Caco-2 (cell line): ENCODE measurements at regions of chr2 and their contacts with region 1.

Region 1: DNA sequence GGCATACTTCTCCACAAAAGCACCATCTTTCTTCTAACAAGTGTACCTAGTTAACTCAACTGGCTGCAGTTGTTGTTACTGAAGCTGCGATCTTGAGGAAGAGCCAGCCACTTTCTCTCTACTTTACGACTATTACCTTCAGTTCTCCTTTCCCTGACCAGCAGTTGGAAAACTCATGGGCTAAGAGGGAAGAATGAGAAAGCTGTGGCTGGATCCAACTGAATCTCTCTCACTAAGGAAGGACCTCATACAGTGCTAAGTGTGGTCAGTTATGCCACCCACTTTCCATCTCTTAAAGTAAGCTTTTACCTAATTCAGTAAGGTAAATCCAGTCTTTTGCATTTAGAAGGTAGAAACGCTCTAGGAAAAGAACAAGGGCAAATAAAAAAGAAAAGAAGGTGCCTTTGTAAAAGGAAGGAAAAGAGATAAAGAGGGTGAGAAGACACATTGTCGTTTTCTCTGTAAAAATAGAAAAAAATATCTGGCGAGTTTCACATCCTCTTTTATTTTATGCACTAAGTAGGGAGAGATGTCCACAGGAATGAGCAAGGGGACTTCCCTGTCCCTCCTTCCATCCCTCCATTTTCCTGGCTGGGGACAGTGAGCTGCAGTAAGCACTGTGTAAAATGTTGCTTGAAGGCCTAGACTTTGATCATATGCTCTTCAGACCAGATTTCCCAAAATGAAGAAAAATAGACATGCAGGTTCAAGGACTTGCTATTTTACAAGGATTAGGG is 73.4 kb downstream of the PLEKHM3 start:
- DNase-seq: no peak
- H3K4me3 ChIP-seq: no peak overlapping the region
- H3K4me3 Mint-ChIP-seq: no peak overlapping the region
- H3K27ac Mint-ChIP-seq: peak overlapping the region; percentile 68
- H3K4me1 ChIP-seq: peaks cover 65% of the 10 kb centered on the region
- H3K4me1 Mint-ChIP-seq: peaks cover 43% of the 10 kb centered on the region
- H3K27me3 ChIP-seq: no peaks in the 10 kb centered on the region
- H3K27me3 Mint-ChIP-seq: no peaks in the 10 kb centered on the region
- CTCF ChIP-seq: no peak

Region 2: GRCh38 chr2:207734264-207734635 is 217.7 kb before region 1 on chr2:
- CTCF ChIA-PET with region 1: no interaction called
- POLR2A ChIA-PET with region 1: no interaction called
- intact Hi-C with region 1: no loop called
- DNase-seq: peak in 1 of 2 experiments; percentile 55
- H3K4me3 ChIP-seq: no peak overlapping the region
- H3K4me3 Mint-ChIP-seq: peak overlapping the region; percentile 52
- H3K27ac Mint-ChIP-seq: no peak overlapping the region
- H3K4me1 ChIP-seq: peaks cover 20% of the 10 kb centered on the region
- H3K4me1 Mint-ChIP-seq: peaks cover 19% of the 10 kb centered on the region
- H3K27me3 ChIP-seq: no peaks in the 10 kb centered on the region
- H3K27me3 Mint-ChIP-seq: no peaks in the 10 kb centered on the region
- CTCF ChIP-seq: peak in 1 of 2 experiments; percentile 67

Region 3: DNA sequence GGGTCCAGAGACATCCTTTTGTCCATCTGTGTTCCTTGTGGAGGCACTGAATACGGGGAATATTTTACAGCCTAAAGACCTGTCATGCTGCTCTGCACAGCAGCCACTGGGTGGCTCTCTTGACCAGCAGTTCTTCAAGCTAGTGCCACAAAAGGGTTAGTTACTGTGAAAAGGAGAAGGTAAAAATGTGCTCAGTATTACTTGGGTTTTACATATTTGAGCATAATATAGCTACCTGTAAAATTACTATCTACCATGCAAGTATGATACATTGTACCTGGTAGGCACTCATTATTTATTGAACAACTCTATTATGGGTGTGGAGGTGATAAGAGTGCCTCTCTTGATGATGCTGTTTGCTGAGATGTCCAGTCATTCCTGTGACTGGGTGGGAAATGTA is 205.8 kb before region 1 on chr2:
- CTCF ChIA-PET with region 1: interaction called, 3 read pairs
- POLR2A ChIA-PET with region 1: interaction called, 5 read pairs
- intact Hi-C with region 1: loop called (anchors 5 kb)
- DNase-seq: peak; percentile 73 to 78
- H3K4me3 ChIP-seq: no peak overlapping the region
- H3K4me3 Mint-ChIP-seq: no peak overlapping the region
- H3K27ac Mint-ChIP-seq: peak overlapping the region; percentile 12
- H3K4me1 ChIP-seq: peaks cover 52% of the 10 kb centered on the region
- H3K4me1 Mint-ChIP-seq: peaks cover 23% of the 10 kb centered on the region
- H3K27me3 ChIP-seq: no peaks in the 10 kb centered on the region
- H3K27me3 Mint-ChIP-seq: no peaks in the 10 kb centered on the region
- CTCF ChIP-seq: peak; percentile 94 to 95

Region 4: DNA sequence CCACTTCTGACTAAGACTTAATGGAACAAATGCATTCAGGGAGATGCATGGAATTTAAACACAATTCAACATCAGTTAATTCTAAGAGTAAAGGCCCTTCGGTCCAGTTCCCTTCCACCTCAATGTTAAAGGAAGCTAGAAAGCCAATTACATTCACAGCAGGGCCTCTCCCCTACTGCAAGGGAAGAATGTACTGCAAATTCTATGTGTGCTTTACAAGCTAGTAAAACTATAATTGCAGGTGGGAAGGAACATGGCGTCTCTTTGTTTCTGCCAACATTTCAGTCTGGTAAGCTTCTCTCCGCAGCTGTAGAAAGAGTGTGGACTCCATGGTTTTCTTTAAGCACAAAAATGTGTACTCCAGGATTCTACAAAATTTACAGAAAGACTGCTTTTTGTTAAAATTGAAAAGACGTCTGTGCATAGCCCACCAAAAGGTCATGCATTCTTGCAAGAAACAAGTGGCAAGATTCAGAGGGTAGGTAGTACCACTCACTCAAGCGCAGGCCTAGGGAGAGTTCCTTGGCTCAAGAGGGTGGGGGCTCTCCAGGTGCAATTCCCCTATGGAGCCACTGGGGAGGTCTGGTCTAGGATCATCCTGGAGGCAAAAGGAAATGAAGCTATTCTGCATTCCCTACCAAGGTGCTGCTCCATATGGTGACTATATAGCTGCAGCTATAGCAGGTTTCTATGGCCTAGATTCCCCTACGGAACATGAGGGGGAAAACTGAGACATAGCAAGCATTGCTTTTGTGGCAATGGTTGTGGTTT is 55.2 kb before region 1 on chr2:
- CTCF ChIA-PET with region 1: interaction called, 3 read pairs
- POLR2A ChIA-PET with region 1: no interaction called
- intact Hi-C with region 1: loop called (anchors 5 kb)
- DNase-seq: peak; percentile 42 to 52
- H3K4me3 ChIP-seq: no peak overlapping the region
- H3K4me3 Mint-ChIP-seq: no peak overlapping the region
- H3K27ac Mint-ChIP-seq: no peak overlapping the region
- H3K4me1 ChIP-seq: peaks cover 35% of the 10 kb centered on the region
- H3K4me1 Mint-ChIP-seq: peaks cover 20% of the 10 kb centered on the region
- H3K27me3 ChIP-seq: no peaks in the 10 kb centered on the region
- H3K27me3 Mint-ChIP-seq: no peaks in the 10 kb centered on the region
- CTCF ChIP-seq: peak; percentile 39 to 44

Region 5: GRCh38 chr2:207920321-207920720 is 31.6 kb before region 1 on chr2:
- CTCF ChIA-PET with region 1: no interaction called
- POLR2A ChIA-PET with region 1: no interaction called
- intact Hi-C with region 1: no loop called
- DNase-seq: no peak
- H3K4me3 ChIP-seq: no peak overlapping the region
- H3K4me3 Mint-ChIP-seq: no peak overlapping the region
- H3K27ac Mint-ChIP-seq: no peak overlapping the region
- H3K4me1 ChIP-seq: peaks cover 14% of the 10 kb centered on the region
- H3K4me1 Mint-ChIP-seq: peaks cover 26% of the 10 kb centered on the region
- H3K27me3 ChIP-seq: no peaks in the 10 kb centered on the region
- H3K27me3 Mint-ChIP-seq: no peaks in the 10 kb centered on the region
- CTCF ChIP-seq: no peak

Region 6: DNA sequence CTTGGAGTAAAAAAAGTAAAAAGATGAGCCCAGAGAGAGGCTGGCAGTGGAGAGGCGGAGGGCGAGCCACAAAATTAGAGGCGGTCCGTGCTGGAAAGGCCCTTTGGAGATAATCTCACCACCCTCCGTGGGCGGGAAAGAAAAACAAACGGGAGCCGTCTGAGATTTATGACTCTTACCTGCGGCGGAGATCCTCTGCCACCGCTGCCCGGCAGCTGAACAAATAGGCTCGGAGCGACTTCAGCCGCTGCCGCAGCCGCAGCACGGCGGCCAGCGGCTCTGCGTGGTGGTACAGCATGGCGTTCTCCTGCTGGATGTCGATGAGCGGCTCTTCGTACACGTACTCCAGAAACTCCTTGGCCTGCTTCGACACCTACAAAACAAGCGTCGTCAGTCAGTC is 21.2 kb before region 1 on chr2:
- CTCF ChIA-PET with region 1: no interaction called
- POLR2A ChIA-PET with region 1: interaction called, 10 read pairs
- intact Hi-C with region 1: loop called (anchors 1 kb)
- DNase-seq: peak; percentile 86 to 89
- H3K4me3 ChIP-seq: peak overlapping the region; percentile 19
- H3K4me3 Mint-ChIP-seq: peak overlapping the region; percentile 79
- H3K27ac Mint-ChIP-seq: peak overlapping the region; percentile 87
- H3K4me1 ChIP-seq: peaks cover 77% of the 10 kb centered on the region
- H3K4me1 Mint-ChIP-seq: peaks cover 40% of the 10 kb centered on the region
- H3K27me3 ChIP-seq: no peaks in the 10 kb centered on the region
- H3K27me3 Mint-ChIP-seq: no peaks in the 10 kb centered on the region
- CTCF ChIP-seq: peak in 1 of 2 experiments; percentile 23

Region 7: GRCh38 chr2:207974216-207974605 is 22.3 kb after region 1 on chr2:
- CTCF ChIA-PET with region 1: interaction called, 3 read pairs
- POLR2A ChIA-PET with region 1: no interaction called
- intact Hi-C with region 1: loop called (anchors 1 kb)
- DNase-seq: peak; percentile 58 to 60
- H3K4me3 ChIP-seq: no peak overlapping the region
- H3K4me3 Mint-ChIP-seq: peak overlapping the region; percentile 8
- H3K27ac Mint-ChIP-seq: peak overlapping the region; percentile 29
- H3K4me1 ChIP-seq: peaks cover 38% of the 10 kb centered on the region
- H3K4me1 Mint-ChIP-seq: peaks cover 31% of the 10 kb centered on the region
- H3K27me3 ChIP-seq: no peaks in the 10 kb centered on the region
- H3K27me3 Mint-ChIP-seq: no peaks in the 10 kb centered on the region
- CTCF ChIP-seq: no peak

Region 8: DNA sequence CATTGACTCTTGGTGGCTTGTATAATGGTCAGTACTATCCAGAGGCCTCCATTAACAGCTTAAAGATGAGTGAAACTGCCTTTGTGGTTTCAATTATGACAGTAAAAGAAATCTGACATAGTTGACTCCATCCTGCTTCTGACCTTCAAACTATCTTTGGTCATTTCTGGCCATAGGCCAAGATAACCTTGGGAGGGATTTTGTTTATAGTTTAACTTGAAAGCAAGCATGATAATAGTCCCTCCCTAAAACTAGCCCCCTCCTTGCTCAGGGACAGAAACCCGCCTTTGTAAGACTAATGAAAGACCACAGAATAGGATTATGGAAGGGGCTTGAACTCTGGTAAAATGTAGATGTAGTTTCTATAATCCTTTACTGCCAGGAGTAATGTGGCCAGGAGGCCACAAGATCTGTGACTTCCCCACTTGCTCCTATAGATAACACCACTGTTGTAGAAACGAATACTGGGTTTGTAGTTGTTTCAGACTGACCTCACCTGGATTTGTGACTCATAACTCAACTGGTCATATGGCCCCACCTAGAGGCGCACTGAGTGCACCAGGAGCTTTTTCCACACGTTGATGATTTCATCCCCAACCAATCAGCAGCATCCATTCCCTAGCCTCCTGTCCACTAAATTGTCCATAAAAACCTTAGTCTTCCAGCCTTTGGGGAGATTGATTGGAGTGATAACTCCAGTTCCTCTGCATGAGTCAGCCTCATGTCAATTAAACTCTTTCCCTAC is 82.0 kb after region 1 on chr2:
- CTCF ChIA-PET with region 1: no interaction called
- POLR2A ChIA-PET with region 1: no interaction called
- intact Hi-C with region 1: loop called (anchors 1 kb)
- DNase-seq: peak; percentile 82 to 85
- H3K4me3 ChIP-seq: no peak overlapping the region
- H3K4me3 Mint-ChIP-seq: no peak overlapping the region
- H3K27ac Mint-ChIP-seq: peak overlapping the region; percentile 70
- H3K4me1 ChIP-seq: peaks cover 51% of the 10 kb centered on the region
- H3K4me1 Mint-ChIP-seq: peaks cover 39% of the 10 kb centered on the region
- H3K27me3 ChIP-seq: no peaks in the 10 kb centered on the region
- H3K27me3 Mint-ChIP-seq: no peaks in the 10 kb centered on the region
- CTCF ChIP-seq: peak; percentile 36